ENCODE measurements at regions of chr11 and their contacts with region 1.

Region 1: DNA sequence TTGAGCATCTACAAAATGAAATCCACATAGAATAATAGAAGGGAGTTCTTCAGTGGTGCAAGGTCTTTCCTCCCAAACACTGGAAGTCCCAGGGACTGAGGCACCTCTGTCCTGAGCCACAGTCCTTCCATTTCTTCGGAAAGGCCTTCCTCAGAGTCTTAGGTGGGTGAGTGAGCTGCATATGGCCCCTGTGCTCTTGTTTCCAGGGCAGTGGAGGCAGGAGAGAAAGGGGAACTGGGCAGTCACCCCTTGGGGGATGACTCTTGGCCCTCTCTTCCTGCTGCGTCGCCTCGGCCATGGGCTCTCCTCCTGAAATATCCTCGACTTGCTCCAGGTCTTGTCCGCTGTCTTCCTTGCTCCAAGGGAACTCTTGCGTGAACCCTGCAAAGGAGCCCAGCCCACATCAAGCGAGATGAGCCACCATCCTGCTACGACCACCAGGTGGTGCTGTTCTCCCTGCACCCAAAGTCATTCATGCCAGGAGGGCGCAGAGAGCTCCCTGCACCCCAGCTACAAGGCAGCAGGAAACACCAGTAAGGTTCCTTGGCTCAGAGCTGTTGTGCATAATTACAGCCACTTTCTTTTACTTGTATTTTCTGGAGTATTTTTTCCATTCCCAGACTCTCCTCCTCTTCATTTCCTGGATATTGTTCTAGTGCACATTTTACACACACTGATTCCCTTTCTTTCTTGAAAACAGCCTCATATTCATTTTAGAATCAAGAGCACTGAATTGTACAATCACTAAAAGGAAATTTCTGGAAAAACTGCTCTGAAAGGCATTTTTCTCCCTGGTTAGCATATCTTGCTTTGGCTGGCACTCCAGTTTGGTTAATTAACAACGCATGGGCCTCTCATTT is 397.8 kb downstream of the OPCML start:
- DNase-seq: peak; percentile 16
- ATAC-seq: peak; percentile 99
- H3K4me3 ChIP-seq: no peak overlapping the region
- H3K27ac ChIP-seq: no peak overlapping the region
- H3K4me1 ChIP-seq: no peaks in the 10 kb centered on the region
- H3K27me3 ChIP-seq: no peaks in the 10 kb centered on the region; a peak in 2 of 4 replicates
- CTCF ChIP-seq: peak; percentile 84 to 92 (median 90)
- EP300 ChIP-seq: no peak
- POLR2A ChIP-seq: no peak
- RAD21 ChIP-seq: peak; percentile 94

Region 2: DNA sequence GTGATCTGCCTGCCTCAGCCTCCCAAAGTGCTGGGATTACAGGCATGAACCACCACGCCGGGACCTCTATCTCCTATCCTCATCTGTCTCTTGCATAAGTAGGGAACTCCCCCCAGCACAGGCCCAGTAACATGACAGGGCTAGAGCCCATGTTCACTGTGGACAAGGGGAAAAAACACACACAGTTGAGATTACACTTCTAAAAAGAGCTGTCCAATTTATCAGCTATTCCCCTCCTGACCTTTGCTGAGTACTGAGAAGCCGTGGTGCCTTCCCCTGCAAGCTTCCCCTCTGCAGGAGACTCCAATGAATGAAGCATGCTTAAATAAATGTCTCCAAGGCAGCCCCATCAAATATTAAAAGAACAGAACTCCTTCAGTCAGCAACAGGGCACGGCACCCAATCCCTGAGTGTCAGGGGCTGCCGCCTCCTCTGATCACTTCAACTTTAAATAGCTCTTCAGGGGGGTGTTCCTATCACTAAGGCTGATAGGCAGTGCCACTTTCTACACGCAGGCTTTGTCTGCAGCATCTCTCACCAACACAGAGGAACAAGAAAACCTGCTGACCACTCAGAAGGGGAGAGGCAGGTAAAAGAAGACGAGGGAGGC is 12.3 kb after region 1 on chr11:
- CTCF ChIA-PET with region 1: interaction called, 20 read pairs
- POLR2A ChIA-PET with region 1: no interaction called
- RAD21 ChIA-PET with region 1: interaction called, 3 read pairs
- SMC1A ChIA-PET with region 1: interaction called, 6 read pairs
- in situ Hi-C with region 1: no loop called
- intact Hi-C with region 1: no loop called
- DNase-seq: no peak
- ATAC-seq: no peak
- H3K4me3 ChIP-seq: no peak overlapping the region
- H3K27ac ChIP-seq: no peak overlapping the region
- H3K4me1 ChIP-seq: no peaks in the 10 kb centered on the region
- H3K27me3 ChIP-seq: peaks cover 0 to 3% of the 10 kb centered on the region in 2 experiments; a peak in 2 of 4 replicates
- CTCF ChIP-seq: no peak
- EP300 ChIP-seq: no peak
- POLR2A ChIP-seq: no peak
- RAD21 ChIP-seq: no peak

Region 3: DNA sequence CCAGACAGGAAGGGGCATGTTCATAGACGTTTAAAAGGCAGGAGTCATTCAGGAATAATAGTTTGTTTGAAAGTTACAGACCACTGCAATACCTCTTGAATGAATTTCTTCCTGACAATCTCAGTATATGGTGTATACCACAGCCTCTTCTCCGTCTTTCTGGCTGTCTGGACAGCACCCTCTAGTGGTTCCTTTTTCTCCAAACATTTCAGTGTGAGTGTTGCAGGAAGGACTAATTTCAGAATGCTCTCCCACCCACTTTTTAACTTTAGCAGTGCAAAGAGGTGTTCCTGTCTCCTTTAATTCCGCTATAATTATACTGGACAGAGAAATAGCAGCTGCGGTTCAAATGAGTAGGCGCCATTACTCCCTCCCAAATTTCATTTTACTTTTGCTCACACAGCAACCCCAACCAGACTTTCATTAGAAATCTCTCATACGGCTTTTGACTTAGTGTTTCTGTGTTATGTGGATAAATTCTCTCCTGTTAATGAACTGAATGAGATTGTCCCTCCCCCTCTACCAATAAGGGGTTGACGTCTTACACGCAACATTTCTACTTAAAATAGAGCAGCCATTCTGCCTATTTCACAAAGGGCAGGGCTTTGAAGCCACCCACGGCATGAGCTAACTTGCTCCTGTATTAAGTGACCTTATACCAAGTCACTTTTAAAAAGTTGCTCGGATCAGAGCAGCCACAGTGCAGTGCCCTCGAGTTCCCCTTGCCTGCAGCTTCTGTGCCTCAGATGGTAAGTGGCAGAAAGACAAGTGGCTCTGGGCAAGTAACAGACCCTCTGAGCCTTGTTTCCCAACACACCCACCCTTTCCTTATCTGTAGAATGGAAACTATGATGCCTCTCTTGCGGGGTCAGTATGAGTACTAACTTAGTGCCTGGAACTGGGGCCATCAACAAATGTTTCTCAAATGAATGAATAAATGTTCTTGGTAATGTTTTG is 29.2 kb after region 1 on chr11:
- CTCF ChIA-PET with region 1: interaction called, 17 read pairs
- POLR2A ChIA-PET with region 1: no interaction called
- RAD21 ChIA-PET with region 1: interaction called, 5 read pairs
- SMC1A ChIA-PET with region 1: interaction called, 9 read pairs
- in situ Hi-C with region 1: no loop called
- intact Hi-C with region 1: no loop called
- DNase-seq: peak; percentile 8
- ATAC-seq: peak; percentile 96
- H3K4me3 ChIP-seq: no peak overlapping the region
- H3K27ac ChIP-seq: no peak overlapping the region
- H3K4me1 ChIP-seq: no peaks in the 10 kb centered on the region
- H3K27me3 ChIP-seq: no peaks in the 10 kb centered on the region
- CTCF ChIP-seq: peak; percentile 64 to 80 (median 75)
- EP300 ChIP-seq: no peak
- POLR2A ChIP-seq: no peak
- RAD21 ChIP-seq: peak; percentile 63

Region 4: GRCh38 chr11:133343951-133344350 is 209.4 kb after region 1 on chr11:
- CTCF ChIA-PET with region 1: no interaction called
- POLR2A ChIA-PET with region 1: no interaction called
- RAD21 ChIA-PET with region 1: no interaction called
- SMC1A ChIA-PET with region 1: no interaction called
- in situ Hi-C with region 1: no loop called
- intact Hi-C with region 1: no loop called
- DNase-seq: no peak
- ATAC-seq: no peak
- H3K4me3 ChIP-seq: no peak overlapping the region
- H3K27ac ChIP-seq: no peak overlapping the region
- H3K4me1 ChIP-seq: no peaks in the 10 kb centered on the region
- H3K27me3 ChIP-seq: no peaks in the 10 kb centered on the region
- CTCF ChIP-seq: no peak
- EP300 ChIP-seq: no peak
- POLR2A ChIP-seq: no peak
- RAD21 ChIP-seq: no peak

Region 5: GRCh38 chr11:133582750-133583149 is 448.2 kb after region 1 on chr11:
- CTCF ChIA-PET with region 1: no interaction called
- POLR2A ChIA-PET with region 1: no interaction called
- RAD21 ChIA-PET with region 1: no interaction called
- SMC1A ChIA-PET with region 1: no interaction called
- in situ Hi-C with region 1: no loop called
- intact Hi-C with region 1: no loop called
- DNase-seq: no peak
- ATAC-seq: no peak
- H3K4me3 ChIP-seq: no peak overlapping the region
- H3K27ac ChIP-seq: no peak overlapping the region
- H3K4me1 ChIP-seq: no peaks in the 10 kb centered on the region
- H3K27me3 ChIP-seq: no peaks in the 10 kb centered on the region
- CTCF ChIP-seq: no peak
- EP300 ChIP-seq: no peak
- POLR2A ChIP-seq: no peak
- RAD21 ChIP-seq: no peak

Region 6: DNA sequence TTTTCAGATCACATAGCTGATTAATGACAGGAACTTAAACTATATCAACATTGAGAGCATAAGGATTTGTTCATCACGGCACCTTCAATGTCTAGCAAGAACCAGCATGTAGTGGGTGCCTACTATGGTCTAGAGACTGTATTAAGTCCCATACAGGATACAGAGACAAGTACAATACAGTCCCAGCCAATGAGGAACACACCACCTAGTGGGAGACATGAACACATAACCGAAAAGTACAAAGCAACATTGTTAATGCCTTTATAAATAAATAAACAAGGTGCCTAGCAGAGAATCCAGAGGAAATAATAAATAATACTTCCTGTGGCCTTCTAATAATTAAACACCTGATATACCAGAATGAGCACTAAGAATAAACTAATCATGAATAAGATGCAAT is 485.4 kb after region 1 on chr11:
- CTCF ChIA-PET with region 1: interaction called, 11 read pairs
- POLR2A ChIA-PET with region 1: no interaction called
- RAD21 ChIA-PET with region 1: no interaction called
- SMC1A ChIA-PET with region 1: interaction called, 4 read pairs
- in situ Hi-C with region 1: loop called (anchors 10 kb)
- intact Hi-C with region 1: loop called (anchors 1 kb)
- DNase-seq: peak; percentile 2
- ATAC-seq: peak; percentile 76
- H3K4me3 ChIP-seq: no peak overlapping the region
- H3K27ac ChIP-seq: no peak overlapping the region
- H3K4me1 ChIP-seq: no peaks in the 10 kb centered on the region
- H3K27me3 ChIP-seq: no peaks in the 10 kb centered on the region; a peak in 1 of 4 replicates
- CTCF ChIP-seq: peak; percentile 18 to 53 (median 32); a peak in 3 of 6 replicates
- EP300 ChIP-seq: no peak
- POLR2A ChIP-seq: no peak
- RAD21 ChIP-seq: peak; percentile 57

Region 7: DNA sequence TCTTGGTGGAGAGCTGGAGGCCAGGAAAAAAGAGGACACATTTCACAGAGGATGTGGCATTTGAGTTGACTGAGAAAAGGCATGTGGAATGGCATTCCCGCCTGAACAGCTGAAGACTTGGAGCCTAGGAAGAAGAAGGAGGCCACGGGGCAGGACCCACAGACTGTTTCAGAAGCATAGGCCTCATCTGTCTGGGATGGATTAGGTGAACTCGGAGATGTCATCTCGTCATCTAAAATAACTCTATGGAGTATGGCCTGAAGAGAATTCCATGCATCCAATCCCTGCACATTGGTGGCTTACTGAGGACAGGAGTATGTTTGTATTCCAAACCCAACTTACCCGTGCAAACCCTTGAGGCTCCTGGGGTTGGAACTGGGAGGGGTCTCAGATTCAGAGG is 694.3 kb after region 1 on chr11:
- CTCF ChIA-PET with region 1: interaction called, 67 read pairs
- POLR2A ChIA-PET with region 1: interaction called, 4 read pairs
- RAD21 ChIA-PET with region 1: no interaction called
- SMC1A ChIA-PET with region 1: interaction called, 5 read pairs
- in situ Hi-C with region 1: loop called (anchors 5 kb)
- intact Hi-C with region 1: no loop called
- DNase-seq: no peak
- ATAC-seq: no peak
- H3K4me3 ChIP-seq: no peak overlapping the region
- H3K27ac ChIP-seq: no peak overlapping the region
- H3K4me1 ChIP-seq: no peaks in the 10 kb centered on the region
- H3K27me3 ChIP-seq: no peaks in the 10 kb centered on the region; a peak in 2 of 4 replicates
- CTCF ChIP-seq: no peak
- EP300 ChIP-seq: no peak
- POLR2A ChIP-seq: no peak
- RAD21 ChIP-seq: no peak